Left cardiac atrium (tissue), 4 donors: ENCODE measurements at regions of chr20 and their contacts with region 1.

Region 1: DNA sequence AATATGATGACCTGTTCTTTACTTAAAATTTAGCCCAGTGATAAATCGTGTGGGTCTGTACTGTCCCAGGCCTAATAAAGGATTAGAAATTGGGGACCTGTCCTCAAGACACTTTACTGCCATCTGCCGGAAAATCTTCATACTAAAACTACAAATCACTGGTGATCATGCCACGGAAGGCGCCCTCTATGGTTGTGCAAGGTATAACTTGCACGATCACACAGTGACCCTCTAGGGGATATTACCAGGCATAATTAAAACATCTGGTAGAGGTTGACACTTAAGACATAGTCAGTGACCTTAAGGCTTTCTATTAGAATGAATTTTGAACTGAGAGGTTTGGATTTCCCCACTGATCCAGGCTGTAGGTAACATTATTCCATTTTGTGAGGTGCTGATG is 172.6 kb downstream of the BMP2 start:
- DNase-seq: no peak
- ATAC-seq: no peak

Region 2: DNA sequence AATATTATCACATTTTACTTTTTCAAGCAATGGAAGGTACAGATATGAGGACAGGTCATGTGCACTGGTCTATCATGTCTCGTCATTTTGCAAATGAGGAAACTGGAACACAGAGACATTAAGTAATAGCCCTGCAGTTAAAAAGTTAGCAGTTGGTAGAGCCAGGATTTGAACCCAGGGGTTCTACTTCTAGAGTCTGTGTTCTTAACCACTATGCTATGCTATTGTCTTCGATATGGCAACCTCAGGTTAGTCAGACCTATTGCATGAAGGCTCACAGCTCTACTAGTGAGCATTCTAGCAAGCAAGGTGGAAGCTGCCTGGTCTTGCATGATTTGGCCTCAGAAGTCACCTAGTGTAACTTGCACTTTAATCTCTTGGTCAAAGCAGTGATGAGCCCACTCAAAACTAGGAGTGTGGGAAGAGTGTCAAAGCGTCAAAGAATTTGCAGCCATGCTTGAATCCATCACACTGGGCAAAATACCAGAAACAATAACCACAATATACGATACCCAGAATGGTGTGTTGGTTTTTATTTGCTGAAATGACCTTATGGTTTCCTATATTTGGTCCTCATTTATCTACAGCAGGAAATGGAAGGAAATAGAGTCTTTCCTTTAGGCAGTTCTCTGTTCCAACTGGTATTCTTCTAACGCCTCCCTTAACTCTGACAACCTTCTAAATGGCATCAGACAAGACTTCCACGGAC is 193.0 kb before region 1 on chr20:
- intact Hi-C with region 1: no loop called
- DNase-seq: no peak
- ATAC-seq: no peak

Region 3: DNA sequence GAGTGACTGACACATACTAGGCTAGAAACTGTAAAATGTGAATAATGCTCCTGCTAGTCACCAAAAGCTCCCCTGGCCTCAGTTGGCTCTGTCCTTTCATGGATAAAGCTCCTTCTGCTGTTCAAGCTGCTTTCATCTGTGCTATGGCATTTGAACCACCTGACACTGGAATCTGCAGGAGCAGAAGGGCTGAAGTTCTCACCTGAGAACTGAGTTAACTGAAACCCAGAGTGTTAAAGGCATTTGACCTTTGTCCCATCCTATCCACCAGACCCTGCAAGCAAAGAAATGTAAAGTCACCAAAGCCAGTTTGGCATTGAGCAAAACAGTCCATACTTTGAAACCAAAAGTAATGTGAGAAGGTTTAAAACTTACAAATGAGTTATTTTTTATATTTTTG is 94.9 kb before region 1 on chr20:
- intact Hi-C with region 1: no loop called
- DNase-seq: no peak
- ATAC-seq: no peak

Region 4: GRCh38 chr20:6976530-6976929 is 36.5 kb after region 1 on chr20:
- intact Hi-C with region 1: no loop called
- DNase-seq: no peak
- ATAC-seq: no peak

Region 5: GRCh38 chr20:6994452-6994851 is 54.4 kb after region 1 on chr20:
- intact Hi-C with region 1: loop called in 1 of 2 experiments (anchors 10 kb)
- DNase-seq: no peak
- ATAC-seq: peak; percentile 47 to 88